WTC11 (cell line): ENCODE measurements at regions of chr9 and their contacts with region 1.

Region 1: DNA sequence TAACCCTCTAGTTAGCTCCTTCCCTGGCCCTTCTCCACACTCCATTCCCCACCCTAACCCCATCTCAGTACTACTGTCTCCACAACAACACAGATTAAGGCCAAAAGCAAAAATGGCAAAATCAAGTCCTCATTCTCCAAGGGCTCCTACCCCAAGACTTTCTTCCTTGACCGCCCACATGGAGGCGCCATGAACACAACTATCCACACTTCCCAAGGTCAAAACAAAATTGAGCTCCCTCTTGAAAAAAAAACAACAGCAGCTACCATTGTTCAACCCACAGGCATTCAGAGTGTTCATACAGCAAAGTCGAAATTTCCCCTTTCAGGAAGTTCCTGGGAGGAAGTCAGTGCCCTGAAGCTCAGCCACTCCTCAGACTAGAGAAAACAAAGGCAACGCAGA is 54.4 kb downstream of the GNAQ start:
- DNase-seq: peak; percentile 68
- ATAC-seq: peak; percentile 87
- H3K4me3 Mint-ChIP-seq: no peak overlapping the region
- H3K27ac Mint-ChIP-seq: peak overlapping the region; percentile 75; the same call in 1 of the 2 replicates
- H3K4me1 Mint-ChIP-seq: peaks cover 73% of the 10 kb centered on the region
- H3K27me3 Mint-ChIP-seq: no peaks in the 10 kb centered on the region
- CTCF ChIP-seq: no peak

Region 2: GRCh38 chr9:77856615-77857014 is 120.6 kb before region 1 on chr9:
- CTCF ChIA-PET with region 1: no interaction called
- POLR2A ChIA-PET with region 1: no interaction called
- DNase-seq: no peak
- ATAC-seq: no peak
- H3K4me3 Mint-ChIP-seq: no peak overlapping the region
- H3K27ac Mint-ChIP-seq: no peak overlapping the region
- H3K4me1 Mint-ChIP-seq: peaks cover 22% of the 10 kb centered on the region
- H3K27me3 Mint-ChIP-seq: no peaks in the 10 kb centered on the region; the same call in 1 of the 2 replicates
- CTCF ChIP-seq: no peak

Region 3: DNA sequence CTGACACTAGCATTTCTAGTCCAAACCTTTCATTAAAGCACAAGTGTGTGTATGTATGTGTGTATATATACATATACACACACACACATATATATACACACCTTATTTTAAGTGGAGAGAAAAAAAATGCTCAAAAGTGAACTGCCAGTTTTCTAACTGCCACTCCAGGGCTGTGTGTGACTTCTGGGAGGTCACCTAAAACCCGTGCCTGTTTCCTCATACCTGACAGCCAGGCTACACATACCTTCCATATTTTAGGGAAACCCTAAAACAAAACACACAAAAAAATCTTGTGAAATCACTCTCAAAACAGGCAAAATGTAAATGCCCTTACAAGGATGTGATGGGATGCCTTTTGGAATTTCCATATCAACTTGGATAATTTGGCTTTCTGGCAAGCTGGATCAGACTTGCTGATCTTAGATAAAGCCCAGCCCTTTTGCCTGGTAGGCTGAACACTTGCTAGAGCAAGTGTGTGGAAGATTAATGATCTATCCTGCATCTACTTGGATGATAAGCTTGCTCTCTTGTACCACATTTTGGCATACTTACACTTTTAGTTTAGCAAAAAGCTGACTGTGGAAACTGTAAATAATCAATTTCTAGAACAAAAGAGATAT is 73.4 kb before region 1 on chr9:
- CTCF ChIA-PET with region 1: no interaction called
- POLR2A ChIA-PET with region 1: no interaction called
- DNase-seq: no peak
- ATAC-seq: no peak
- H3K4me3 Mint-ChIP-seq: no peak overlapping the region
- H3K27ac Mint-ChIP-seq: peak overlapping the region; percentile 34; the same call in 1 of the 2 replicates
- H3K4me1 Mint-ChIP-seq: peaks cover 20% of the 10 kb centered on the region
- H3K27me3 Mint-ChIP-seq: no peaks in the 10 kb centered on the region
- CTCF ChIP-seq: no peak

Region 4: GRCh38 chr9:77944556-77945243 is 32.5 kb before region 1 on chr9:
- CTCF ChIA-PET with region 1: interaction called, 10 read pairs
- POLR2A ChIA-PET with region 1: no interaction called
- DNase-seq: peak; percentile 44
- ATAC-seq: peak; percentile 80
- H3K4me3 Mint-ChIP-seq: no peak overlapping the region
- H3K27ac Mint-ChIP-seq: peak overlapping the region; percentile 43
- H3K4me1 Mint-ChIP-seq: peaks cover 55% of the 10 kb centered on the region
- H3K27me3 Mint-ChIP-seq: no peaks in the 10 kb centered on the region
- CTCF ChIP-seq: no peak

Region 5: DNA sequence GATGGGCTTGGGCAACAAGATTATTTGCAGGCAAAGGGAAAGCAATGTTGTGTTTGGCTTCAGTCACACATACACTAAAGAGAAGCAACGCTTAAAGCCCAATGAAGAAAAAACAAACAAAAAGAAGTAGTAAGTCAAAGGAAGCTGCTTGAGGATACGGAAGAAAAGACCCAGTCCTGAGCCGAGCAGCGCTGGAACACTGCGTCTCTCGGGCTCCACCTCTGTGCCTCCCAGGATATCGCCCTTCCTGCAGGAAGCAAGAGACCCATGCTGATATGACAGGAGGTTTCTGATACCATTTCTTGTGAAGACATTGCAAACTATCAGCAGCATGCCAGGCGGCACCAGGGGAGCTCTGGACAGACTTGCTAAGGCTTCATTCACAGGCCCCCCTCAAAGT is 44.5 kb after region 1 on chr9:
- CTCF ChIA-PET with region 1: interaction called, 13 read pairs
- POLR2A ChIA-PET with region 1: no interaction called
- DNase-seq: no peak
- ATAC-seq: peak; percentile 72
- H3K4me3 Mint-ChIP-seq: peak overlapping the region; percentile 15; the same call in 1 of the 2 replicates
- H3K27ac Mint-ChIP-seq: peak overlapping the region; percentile 24; the same call in 1 of the 2 replicates
- H3K4me1 Mint-ChIP-seq: peaks cover 81% of the 10 kb centered on the region
- H3K27me3 Mint-ChIP-seq: no peaks in the 10 kb centered on the region
- CTCF ChIP-seq: no peak

Region 6: GRCh38 chr9:78044189-78044588 is 67.0 kb after region 1 on chr9:
- CTCF ChIA-PET with region 1: interaction called, 15 read pairs
- POLR2A ChIA-PET with region 1: no interaction called
- DNase-seq: no peak
- ATAC-seq: peak; percentile 53
- H3K4me3 Mint-ChIP-seq: no peak overlapping the region
- H3K27ac Mint-ChIP-seq: no peak overlapping the region
- H3K4me1 Mint-ChIP-seq: peaks cover 6% of the 10 kb centered on the region
- H3K27me3 Mint-ChIP-seq: no peaks in the 10 kb centered on the region
- CTCF ChIP-seq: no peak

Region 7: GRCh38 chr9:78121488-78121887 is 144.3 kb after region 1 on chr9:
- CTCF ChIA-PET with region 1: interaction called, 21 read pairs
- POLR2A ChIA-PET with region 1: no interaction called
- DNase-seq: peak; percentile 80
- ATAC-seq: peak; percentile 57; the same call in 1 of the 2 replicates
- H3K4me3 Mint-ChIP-seq: no peak overlapping the region
- H3K27ac Mint-ChIP-seq: no peak overlapping the region
- H3K4me1 Mint-ChIP-seq: peaks cover 6% of the 10 kb centered on the region; the same call in 1 of the 2 replicates
- H3K27me3 Mint-ChIP-seq: no peaks in the 10 kb centered on the region
- CTCF ChIP-seq: peak; percentile 75